ENCODE measurements at regions of chr1 and their contacts with region 1.

Region 1: GRCh38 chr1:39653546-39654031 is 14.1 kb upstream of the HEYL start:
- DNase-seq: peak; percentile 88
- H3K4me3 Mint-ChIP-seq: no peak overlapping the region
- H3K27ac Mint-ChIP-seq: no peak overlapping the region
- H3K4me1 Mint-ChIP-seq: peaks cover 16% of the 10 kb centered on the region
- H3K27me3 Mint-ChIP-seq: peaks cover 12% of the 10 kb centered on the region

Region 2: GRCh38 chr1:39575191-39576015 is 78.2 kb before region 1 on chr1:
- CTCF ChIA-PET with region 1: interaction called, 25 read pairs
- POLR2A ChIA-PET with region 1: interaction called, 3 read pairs
- intact Hi-C with region 1: no loop called
- DNase-seq: peak; percentile 68
- H3K4me3 Mint-ChIP-seq: peak overlapping the region; percentile 91
- H3K27ac Mint-ChIP-seq: peak overlapping the region; percentile 86
- H3K4me1 Mint-ChIP-seq: peaks cover 46% of the 10 kb centered on the region
- H3K27me3 Mint-ChIP-seq: no peaks in the 10 kb centered on the region

Region 3: DNA sequence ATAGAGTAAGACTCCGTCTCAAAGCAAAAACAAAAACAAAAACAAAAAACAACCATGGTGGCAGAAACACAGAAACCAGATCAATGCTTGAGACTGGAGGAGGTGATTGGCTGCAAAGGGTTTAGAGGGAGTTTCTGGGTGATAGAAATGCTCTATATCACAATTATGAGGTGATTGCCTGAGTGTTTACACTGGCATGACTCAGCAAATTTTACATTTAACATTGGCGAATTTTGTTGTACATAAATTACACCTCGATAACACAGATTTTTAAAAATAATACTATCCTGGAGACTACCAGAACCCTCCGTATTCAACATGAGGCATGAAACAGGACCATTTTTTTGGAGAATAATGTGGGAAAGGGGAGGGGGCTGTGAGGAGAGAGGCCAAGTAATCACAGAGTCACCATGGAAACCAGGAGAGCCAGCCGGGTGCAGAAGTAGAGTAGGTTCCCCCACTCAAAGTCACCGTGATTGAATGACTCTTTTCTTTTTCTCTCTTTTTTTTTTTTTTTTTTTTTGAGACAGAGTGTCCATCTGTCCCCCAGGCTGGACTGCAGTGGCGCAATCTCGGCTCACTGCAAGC is 38.4 kb before region 1 on chr1:
- CTCF ChIA-PET with region 1: interaction called, 383 read pairs
- POLR2A ChIA-PET with region 1: no interaction called
- intact Hi-C with region 1: no loop called
- DNase-seq: no peak
- H3K4me3 Mint-ChIP-seq: no peak overlapping the region
- H3K27ac Mint-ChIP-seq: no peak overlapping the region
- H3K4me1 Mint-ChIP-seq: no peaks in the 10 kb centered on the region
- H3K27me3 Mint-ChIP-seq: no peaks in the 10 kb centered on the region

Region 4: DNA sequence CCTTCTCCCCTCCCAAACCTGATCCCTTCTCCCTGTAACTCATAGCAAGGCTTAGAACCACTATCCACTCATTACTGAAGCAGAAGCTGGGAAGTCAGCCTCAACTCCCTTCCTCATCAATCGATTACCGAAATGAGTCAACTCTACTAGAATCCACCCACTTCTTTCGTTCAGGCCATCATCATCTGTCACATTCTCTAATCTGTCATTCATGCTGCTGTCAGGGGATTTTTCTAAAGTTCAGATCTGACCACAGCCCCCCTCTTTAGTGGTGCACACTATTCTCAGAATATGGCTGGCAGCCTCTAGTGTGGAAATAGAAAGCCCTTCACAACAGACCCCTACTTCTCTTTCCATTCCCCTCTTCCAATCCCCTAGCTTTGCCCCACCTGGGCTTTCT is 13.2 kb after region 1 on chr1:
- CTCF ChIA-PET with region 1: interaction called, 158 read pairs
- POLR2A ChIA-PET with region 1: interaction called, 4 read pairs
- intact Hi-C with region 1: no loop called
- DNase-seq: peak; percentile 71
- H3K4me3 Mint-ChIP-seq: no peak overlapping the region
- H3K27ac Mint-ChIP-seq: peak overlapping the region; percentile 47
- H3K4me1 Mint-ChIP-seq: peaks cover 20% of the 10 kb centered on the region
- H3K27me3 Mint-ChIP-seq: peaks cover 27% of the 10 kb centered on the region

Region 5: DNA sequence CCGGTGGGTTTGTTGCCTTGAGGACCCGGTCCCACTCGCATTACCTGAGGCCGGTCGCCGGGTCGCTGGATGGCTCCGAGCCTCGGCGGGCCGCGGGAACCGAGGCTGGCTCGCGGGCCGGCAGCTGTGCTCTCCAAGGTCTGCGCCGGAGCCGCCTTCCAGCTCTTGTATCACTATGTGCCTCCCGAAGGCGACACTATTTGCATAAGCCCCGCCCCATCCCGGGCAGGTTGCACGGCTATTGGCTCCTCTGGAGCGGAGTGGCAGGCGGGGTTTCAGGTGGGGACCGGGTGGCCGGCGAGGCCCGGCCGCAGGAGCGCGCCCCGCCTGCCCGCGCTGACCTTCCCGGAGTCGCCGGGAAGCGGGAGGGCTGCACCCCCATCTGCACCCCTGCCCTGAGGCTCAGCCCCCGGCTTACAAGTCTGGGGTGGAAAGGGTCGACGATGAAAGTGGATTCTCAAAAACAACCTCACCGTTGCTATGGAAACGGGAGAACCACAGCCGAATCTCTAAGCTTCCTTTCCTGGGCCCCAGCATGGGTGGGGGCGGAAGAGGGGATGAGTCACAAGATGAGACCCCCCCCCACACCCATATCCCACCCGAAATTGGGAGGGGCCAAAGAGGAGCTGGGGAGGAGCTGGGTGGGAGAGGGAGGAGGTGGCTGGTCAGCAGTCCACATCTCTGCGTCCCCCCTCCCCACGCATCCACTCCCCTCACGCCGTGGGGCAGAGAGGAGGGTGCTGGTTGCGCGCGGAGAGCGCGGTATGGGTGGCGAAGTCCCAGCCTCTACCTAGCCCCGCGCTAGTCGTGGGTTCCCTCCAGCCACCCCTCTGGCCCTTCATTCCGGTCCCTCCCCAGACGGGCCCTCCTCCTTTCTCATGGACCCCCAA is 37.9 kb after region 1 on chr1 and contains the start of gene HPCAL4:
- CTCF ChIA-PET with region 1: interaction called, 33 read pairs
- POLR2A ChIA-PET with region 1: no interaction called
- intact Hi-C with region 1: no loop called
- DNase-seq: peak; percentile 90
- H3K4me3 Mint-ChIP-seq: peak within 1 kb of the TSS; percentile 70
- H3K27ac Mint-ChIP-seq: no peak within 1 kb of the TSS
- H3K4me1 Mint-ChIP-seq: peaks cover 39% of the 10 kb centered on the region
- H3K27me3 Mint-ChIP-seq: peaks cover 5% of the 10 kb centered on the region
- total RNA-seq, gene HPCAL4: 0.43 to 0.61 TPM

Region 6: DNA sequence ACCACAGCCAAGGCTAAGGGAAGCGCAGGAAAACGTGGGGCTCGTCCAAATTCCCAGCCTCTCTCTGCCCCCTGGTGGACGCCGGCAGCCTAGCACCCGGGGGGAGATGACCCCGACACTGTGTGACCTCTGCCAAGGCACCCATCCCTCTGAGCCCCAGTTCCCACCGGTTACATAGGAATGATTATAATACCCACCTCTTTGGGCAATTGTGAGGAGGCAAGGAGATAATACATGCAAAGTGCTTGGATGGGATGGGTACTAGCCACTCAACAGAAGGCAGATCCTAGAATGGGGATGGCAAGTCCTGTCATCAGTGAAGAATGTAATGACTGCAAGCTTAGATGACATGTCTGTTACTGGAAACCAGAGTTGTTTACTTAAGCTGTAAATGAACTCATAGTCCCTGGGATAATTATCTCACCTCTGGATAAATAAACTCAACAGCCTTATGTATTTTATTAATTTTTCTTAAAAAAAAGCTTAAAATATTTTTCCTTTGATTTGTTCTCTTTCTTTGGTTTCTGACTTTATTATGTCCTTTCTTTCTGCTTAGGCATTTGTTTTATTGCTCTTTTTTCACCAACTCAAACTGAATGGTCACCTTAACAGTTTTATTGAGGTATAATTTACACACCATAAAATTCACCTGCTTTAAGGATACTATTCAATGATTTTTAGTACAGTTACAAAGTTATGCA is 146.3 kb after region 1 on chr1:
- CTCF ChIA-PET with region 1: interaction called, 11 read pairs
- POLR2A ChIA-PET with region 1: no interaction called
- intact Hi-C with region 1: no loop called
- DNase-seq: peak; percentile 80
- H3K4me3 Mint-ChIP-seq: peak overlapping the region; percentile 67
- H3K27ac Mint-ChIP-seq: peak overlapping the region; percentile 91
- H3K4me1 Mint-ChIP-seq: peaks cover 17% of the 10 kb centered on the region
- H3K27me3 Mint-ChIP-seq: no peaks in the 10 kb centered on the region

Region 7: GRCh38 chr1:40096977-40097782 is 443.6 kb after region 1 on chr1 and contains the start of gene PPT1:
- CTCF ChIA-PET with region 1: no interaction called
- POLR2A ChIA-PET with region 1: no interaction called
- intact Hi-C with region 1: no loop called
- DNase-seq: peak; percentile 85
- H3K4me3 Mint-ChIP-seq: peak within 1 kb of the TSS; percentile 81
- H3K27ac Mint-ChIP-seq: peak within 1 kb of the TSS; percentile 74
- H3K4me1 Mint-ChIP-seq: peaks cover 34% of the 10 kb centered on the region
- H3K27me3 Mint-ChIP-seq: peaks cover 5% of the 10 kb centered on the region
- total RNA-seq, gene PPT1: 67.1 to 67.4 TPM

Measured in activated CD4-positive, alpha-beta memory T cell treated with anti-CD3 and anti-CD28 coated beads for 36 hours (primary cell).